AG04450 (cell line): ENCODE measurements at regions of chr11 and their contacts with region 1.

Region 1: DNA sequence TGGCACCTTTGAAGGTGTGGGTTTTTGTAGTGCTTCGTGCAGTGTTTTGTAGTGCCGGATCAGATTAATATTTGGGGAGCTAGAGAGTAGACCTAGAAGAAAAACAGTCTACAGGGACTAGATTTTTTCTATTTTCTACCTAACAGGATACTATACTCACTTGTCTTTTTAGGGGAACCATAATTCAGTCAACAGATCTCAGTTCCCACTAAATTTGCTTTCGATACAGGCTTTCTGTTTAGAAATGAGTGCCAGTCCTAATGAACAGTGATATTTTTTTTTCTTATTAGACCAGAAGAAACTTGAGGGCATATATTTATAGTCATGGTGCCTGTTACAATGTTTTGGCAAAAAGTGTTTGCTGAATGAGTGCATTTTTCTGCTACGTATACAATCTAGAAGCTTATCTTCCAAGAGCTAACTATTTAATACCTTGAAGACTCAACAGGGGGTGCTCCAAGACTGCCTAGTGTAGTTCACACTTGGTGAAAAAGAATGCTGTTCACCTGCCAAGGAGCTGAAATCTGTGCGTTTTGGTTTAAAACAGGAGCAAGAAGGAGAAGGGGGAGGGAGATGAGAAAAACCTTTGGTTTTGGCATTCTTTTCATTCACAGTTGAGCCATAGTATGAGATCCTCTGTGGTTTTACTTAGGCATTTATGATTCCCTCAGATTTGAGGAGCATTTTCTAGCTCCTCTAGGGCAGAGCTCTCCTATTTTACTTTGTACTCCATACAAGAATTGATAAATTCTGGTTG is 44.9 kb upstream of the VSTM5 start:
- DNase-seq: peak; percentile 69
- H3K4me3 ChIP-seq: no peak overlapping the region; the same call in 1 of the 2 replicates
- H3K27ac ChIP-seq: no peak overlapping the region
- H3K27me3 ChIP-seq: peaks cover 7% of the 10 kb centered on the region
- CTCF ChIP-seq: peak; percentile 89

Region 2: GRCh38 chr11:93817426-93818348 is 77.6 kb before region 1 on chr11:
- CTCF ChIA-PET with region 1: no interaction called
- POLR2A ChIA-PET with region 1: no interaction called
- DNase-seq: no peak
- H3K4me3 ChIP-seq: no peak overlapping the region
- H3K27ac ChIP-seq: no peak overlapping the region
- H3K27me3 ChIP-seq: no peaks in the 10 kb centered on the region
- CTCF ChIP-seq: no peak

Region 3: DNA sequence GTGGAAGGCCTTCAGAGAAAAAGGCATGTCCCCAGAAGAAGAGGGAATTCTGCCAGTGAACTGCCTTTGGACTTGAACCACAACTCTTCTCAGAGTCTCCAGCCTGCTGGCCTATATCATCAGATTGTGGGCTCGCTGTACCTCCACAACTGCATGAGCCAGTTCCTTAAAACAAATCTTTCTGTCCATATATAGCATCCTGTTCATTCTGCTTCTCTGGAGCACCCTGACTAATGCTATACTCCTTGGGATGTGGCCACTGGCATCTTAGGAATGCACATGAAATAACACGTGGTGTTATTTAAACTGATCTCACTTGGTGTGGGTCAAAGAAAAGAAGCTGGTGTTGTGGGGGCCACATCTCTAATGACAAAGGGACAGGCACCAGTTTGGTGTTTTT is 13.4 kb after region 1 on chr11:
- CTCF ChIA-PET with region 1: interaction called, 40 read pairs
- POLR2A ChIA-PET with region 1: no interaction called
- DNase-seq: peak; percentile 78
- H3K4me3 ChIP-seq: no peak overlapping the region
- H3K27ac ChIP-seq: peak overlapping the region; percentile 84
- H3K27me3 ChIP-seq: no peaks in the 10 kb centered on the region
- CTCF ChIP-seq: no peak

Region 4: DNA sequence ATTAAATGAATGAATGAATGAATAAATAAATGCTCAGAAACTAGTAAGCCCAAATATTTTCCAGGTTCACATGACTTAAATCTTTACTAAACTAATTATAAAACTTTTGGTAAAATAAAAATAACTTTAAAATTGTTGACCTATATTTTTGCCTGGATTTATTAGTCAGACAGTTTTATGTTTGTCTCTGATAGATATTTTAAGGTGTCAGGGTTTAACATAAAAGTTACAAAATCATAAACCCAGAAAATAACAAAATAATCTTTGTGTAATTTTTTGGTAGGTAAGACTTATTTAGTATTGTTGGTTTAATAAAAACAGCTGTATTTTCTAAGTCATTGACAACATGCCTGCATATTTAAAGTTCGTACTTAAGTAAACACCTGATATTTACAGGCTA is 98.5 kb after region 1 on chr11:
- CTCF ChIA-PET with region 1: no interaction called
- POLR2A ChIA-PET with region 1: no interaction called
- DNase-seq: no peak
- H3K4me3 ChIP-seq: no peak overlapping the region
- H3K27ac ChIP-seq: no peak overlapping the region
- H3K27me3 ChIP-seq: no peaks in the 10 kb centered on the region
- CTCF ChIP-seq: no peak

Region 5: GRCh38 chr11:94046796-94047195 is 151.5 kb after region 1 on chr11:
- CTCF ChIA-PET with region 1: no interaction called
- POLR2A ChIA-PET with region 1: no interaction called
- DNase-seq: no peak
- H3K4me3 ChIP-seq: no peak overlapping the region
- H3K27ac ChIP-seq: no peak overlapping the region
- H3K27me3 ChIP-seq: peaks cover 8% of the 10 kb centered on the region
- CTCF ChIP-seq: no peak

Region 6: GRCh38 chr11:94134651-94135512 is 239.6 kb after region 1 on chr11:
- CTCF ChIA-PET with region 1: interaction called, 14 read pairs
- POLR2A ChIA-PET with region 1: no interaction called
- DNase-seq: peak; percentile 80
- H3K4me3 ChIP-seq: peak overlapping the region; percentile 50
- H3K27ac ChIP-seq: peak overlapping the region; percentile 98
- H3K27me3 ChIP-seq: no peaks in the 10 kb centered on the region
- CTCF ChIP-seq: no peak

Region 7: DNA sequence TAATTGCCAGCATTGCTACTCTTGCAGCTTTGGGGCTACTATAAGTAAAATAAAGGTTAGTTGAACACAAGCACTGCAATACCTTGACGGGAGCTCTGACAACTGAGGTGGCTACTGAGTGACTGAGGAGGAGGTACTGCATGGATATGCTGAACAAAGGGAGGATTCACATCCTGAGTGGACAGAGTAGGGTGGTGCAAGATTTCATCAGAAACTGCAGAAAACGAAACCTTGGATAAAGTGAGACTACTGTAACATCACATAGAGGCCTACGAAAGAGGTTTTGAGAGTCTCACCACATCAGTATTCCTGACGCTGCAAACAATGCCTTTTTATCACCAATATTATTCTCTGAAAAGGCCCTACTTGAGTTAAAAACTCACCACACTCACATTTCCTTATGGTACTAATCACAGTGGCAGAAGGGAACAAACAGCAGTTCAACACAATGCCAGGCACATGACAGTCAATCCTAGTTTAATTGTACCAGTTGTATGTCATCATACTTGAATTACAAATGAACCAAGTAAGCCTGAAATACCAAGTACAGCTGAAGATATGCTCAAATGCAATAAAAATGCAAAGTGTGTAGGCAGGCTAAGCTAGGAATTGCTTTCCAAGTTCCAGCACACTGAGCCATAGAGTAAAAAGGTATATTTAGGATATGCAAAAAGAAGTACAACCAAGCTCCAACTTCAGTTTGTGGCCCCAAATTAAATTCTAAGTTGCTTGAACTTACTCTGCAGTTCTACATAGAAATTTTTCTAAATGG is 510.0 kb after region 1 on chr11:
- CTCF ChIA-PET with region 1: interaction called, 10 read pairs
- POLR2A ChIA-PET with region 1: no interaction called
- DNase-seq: no peak
- H3K4me3 ChIP-seq: no peak overlapping the region
- H3K27ac ChIP-seq: no peak overlapping the region
- H3K27me3 ChIP-seq: peaks cover 15% of the 10 kb centered on the region
- CTCF ChIP-seq: no peak

Region 8: DNA sequence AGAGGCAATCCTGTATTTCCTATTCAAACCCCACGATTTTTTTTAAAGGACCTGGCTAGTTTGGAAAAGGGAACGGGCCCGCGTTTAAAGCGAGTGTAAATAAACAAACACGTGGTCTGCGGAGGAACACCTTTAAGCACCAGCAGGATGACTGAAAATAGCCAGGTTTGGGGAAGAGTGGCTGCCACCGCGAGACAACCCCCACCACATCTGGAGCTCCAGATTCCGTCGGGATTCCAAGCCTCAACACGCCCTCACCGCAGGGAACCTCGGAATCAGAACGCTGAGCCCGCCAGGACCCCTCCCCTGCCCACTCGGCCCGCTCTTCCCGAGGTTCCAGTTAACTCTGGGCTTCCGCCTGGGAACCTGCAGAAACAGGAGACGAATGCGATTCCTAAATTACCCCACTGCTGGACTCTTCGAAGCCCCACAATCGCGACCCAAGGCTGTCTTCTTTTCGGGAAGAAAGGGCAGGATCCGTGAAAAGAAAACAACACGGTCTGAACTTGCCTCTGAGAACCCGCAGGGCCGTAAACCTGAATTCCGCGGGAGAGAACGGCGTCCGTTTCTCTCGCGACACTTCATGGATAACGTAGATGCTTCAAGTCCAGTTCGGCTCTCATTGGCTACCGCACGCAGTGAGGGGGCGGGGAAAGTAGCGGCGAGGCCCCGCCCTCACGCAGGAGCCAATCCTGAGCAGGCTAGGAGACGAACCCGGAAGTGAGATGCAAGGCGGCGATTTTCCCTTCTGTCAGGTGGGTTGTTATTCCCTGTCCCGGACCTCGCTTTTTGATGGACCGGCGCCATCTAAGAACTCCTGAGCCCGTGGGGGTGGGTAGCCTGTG is 598.2 kb after region 1 on chr11 and contains the starts of genes ANKRD49 and MRE11:
- CTCF ChIA-PET with region 1: interaction called, 22 read pairs
- POLR2A ChIA-PET with region 1: no interaction called
- DNase-seq: peak; percentile 95
- H3K4me3 ChIP-seq: peak within 1 kb of the TSS; percentile 88
- H3K27ac ChIP-seq: peak within 1 kb of the TSS; percentile 91
- H3K27me3 ChIP-seq: no peaks in the 10 kb centered on the region
- CTCF ChIP-seq: no peak
- polyA plus RNA-seq, gene ANKRD49: 12.4 and 16.0 TPM in 2 replicates
- polyA plus RNA-seq, gene MRE11: 8.1 and 10.3 TPM in 2 replicates

Region 9: DNA sequence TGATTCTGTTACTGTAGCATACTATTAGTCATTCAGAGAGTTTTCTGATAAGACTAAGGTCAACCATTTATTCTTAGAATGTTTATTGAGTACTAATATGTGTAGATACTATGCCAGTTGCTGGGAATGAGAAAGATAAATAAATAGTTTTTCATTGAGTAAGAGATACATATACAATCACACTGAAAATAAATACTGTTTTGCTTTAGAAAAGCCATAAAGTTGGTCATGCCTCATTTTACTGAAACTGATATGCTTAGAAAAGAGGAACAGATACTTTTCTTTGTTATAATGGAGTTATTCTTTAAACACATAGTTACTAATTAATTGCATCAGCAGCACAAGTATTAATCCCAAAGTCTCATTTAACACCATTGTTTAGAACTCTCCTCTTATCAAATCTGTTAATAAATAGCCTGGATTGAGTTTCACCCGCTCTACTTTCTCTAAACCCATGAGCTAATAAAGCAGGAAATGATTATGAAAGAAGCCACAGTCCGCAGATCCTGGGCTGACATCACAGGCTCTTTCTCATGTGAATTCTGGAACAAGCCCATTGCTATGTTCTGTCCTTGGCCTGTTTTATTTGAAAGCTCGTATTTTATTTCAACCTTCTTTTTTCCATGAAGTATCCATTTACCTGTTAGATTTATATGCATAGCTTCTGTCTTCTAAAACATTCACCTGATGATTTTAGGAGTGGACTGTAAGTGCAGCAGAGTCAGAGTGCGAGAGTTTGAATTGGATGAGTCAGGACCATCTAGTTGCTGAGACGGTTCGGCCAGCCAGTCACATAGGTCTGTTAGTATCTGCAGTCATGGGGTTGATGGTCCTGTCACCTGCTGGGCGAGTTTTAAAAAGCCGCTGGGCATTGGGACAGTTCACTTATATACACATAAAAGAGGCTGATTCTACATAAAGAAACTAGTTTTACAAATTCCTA is 707.4 kb after region 1 on chr11:
- CTCF ChIA-PET with region 1: interaction called, 54 read pairs
- POLR2A ChIA-PET with region 1: no interaction called
- DNase-seq: peak; percentile 81
- H3K4me3 ChIP-seq: no peak overlapping the region
- H3K27ac ChIP-seq: no peak overlapping the region
- H3K27me3 ChIP-seq: no peaks in the 10 kb centered on the region
- CTCF ChIP-seq: peak; percentile 78